ENCODE measurements at regions of chr16 and their contacts with region 1.

Region 1: DNA sequence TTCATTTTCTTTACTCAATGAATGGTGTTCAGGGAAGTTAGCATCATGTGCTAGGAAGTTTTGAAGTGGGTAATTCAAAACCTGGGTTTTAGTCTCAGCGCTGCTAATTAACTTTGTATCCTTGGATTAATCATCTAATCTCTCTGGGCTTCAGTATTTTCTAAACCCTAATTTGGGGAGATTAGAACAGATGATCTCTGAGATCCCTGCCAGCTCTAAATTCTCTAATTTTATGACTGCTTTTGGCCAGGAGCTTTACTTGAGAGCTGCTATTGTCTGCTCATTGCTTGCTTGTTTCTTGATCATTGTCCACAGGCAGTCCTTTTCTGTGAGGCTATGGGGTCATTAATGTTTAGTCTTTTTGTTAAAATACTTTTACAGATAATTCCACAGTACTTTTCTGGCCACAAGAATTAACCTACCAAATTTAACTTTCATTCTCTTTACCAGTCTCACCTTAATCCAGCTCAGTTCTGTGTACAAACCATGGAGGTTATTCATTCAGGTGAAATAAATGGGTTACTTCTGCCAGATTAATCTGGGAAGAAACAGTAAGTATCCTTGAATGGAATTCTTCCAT is 28.4 kb upstream of the VWA3A start:
- DNase-seq: no peak
- H3K4me3 Mint-ChIP-seq: no peak overlapping the region
- H3K27ac Mint-ChIP-seq: no peak overlapping the region
- H3K4me1 Mint-ChIP-seq: peaks cover 23% of the 10 kb centered on the region
- H3K27me3 Mint-ChIP-seq: no peaks in the 10 kb centered on the region
- CTCF ChIP-seq: no peak

Region 2: DNA sequence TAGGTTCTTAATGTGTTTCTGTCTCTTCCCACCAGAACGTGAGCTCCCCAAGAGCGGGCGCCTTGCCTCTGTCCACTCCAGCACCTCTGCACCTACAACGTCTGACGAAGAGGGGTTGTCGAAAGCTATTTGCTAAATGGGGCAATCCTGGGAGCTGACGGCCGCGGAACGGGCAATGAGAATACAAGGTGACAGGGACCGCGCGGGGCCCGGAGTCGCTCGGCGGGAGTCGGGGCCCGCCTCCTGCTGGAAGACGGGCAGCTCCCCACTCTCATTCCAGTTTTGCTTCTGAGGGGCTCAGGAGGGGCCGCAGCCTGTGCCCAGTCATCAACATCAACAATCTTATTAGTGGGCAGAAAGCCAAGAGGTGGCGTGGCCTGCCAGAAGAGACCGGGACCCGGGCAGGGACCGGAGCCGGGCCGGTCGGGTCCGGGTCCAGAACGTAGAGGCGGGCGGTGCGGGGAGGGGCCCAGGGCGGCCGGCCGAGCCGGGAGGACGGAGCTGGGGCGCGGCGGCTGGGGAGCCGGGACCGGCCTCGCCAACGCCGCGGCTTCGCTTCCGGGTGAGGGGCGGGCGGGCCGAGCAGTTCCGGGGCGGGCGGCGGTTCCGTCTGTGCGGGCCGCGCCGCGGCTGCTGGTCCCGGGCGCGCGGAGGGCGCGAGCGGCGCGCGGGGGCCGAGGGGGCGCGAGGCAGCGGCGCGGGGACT is 56.3 kb before region 1 on chr16 and contains the start of gene MOSMO:
- CTCF ChIA-PET with region 1: interaction called, 9 read pairs
- POLR2A ChIA-PET with region 1: interaction called, 26 read pairs
- intact Hi-C with region 1: no loop called
- DNase-seq: peak; percentile 74
- H3K4me3 Mint-ChIP-seq: peak within 1 kb of the TSS; percentile 90
- H3K27ac Mint-ChIP-seq: peak within 1 kb of the TSS; percentile 70
- H3K4me1 Mint-ChIP-seq: peaks cover 26% of the 10 kb centered on the region
- H3K27me3 Mint-ChIP-seq: no peaks in the 10 kb centered on the region
- CTCF ChIP-seq: no peak
- total RNA-seq, gene MOSMO: 16.4 and 17.1 TPM in 2 replicates

Region 3: DNA sequence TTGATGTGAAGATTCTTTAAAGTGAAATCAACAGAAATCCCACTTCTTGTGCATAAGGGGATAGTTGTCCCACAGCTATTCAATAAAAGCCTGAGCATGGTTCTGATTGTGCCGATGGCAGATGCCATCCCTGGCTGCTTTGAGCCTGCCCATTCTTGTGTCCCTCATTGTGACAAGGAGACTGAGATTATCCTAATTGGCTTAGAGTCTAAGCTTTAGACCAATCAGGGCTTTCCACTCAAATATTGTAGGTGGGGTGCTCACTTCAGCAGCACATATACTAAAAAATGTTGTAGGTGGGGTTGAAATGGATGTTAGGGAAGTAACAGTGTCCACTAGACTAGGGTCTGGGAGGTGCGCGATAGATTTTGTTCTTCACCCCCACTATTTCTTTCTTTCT is 79.4 kb after region 1 on chr16:
- CTCF ChIA-PET with region 1: no interaction called
- POLR2A ChIA-PET with region 1: no interaction called
- intact Hi-C with region 1: no loop called
- DNase-seq: no peak
- H3K4me3 Mint-ChIP-seq: no peak overlapping the region
- H3K27ac Mint-ChIP-seq: no peak overlapping the region
- H3K4me1 Mint-ChIP-seq: no peaks in the 10 kb centered on the region
- H3K27me3 Mint-ChIP-seq: peaks cover 37% of the 10 kb centered on the region
- CTCF ChIP-seq: no peak

Measured in MCF 10A (cell line).